ENCODE measurements at regions of chr9 and their contacts with region 1.

Region 1: DNA sequence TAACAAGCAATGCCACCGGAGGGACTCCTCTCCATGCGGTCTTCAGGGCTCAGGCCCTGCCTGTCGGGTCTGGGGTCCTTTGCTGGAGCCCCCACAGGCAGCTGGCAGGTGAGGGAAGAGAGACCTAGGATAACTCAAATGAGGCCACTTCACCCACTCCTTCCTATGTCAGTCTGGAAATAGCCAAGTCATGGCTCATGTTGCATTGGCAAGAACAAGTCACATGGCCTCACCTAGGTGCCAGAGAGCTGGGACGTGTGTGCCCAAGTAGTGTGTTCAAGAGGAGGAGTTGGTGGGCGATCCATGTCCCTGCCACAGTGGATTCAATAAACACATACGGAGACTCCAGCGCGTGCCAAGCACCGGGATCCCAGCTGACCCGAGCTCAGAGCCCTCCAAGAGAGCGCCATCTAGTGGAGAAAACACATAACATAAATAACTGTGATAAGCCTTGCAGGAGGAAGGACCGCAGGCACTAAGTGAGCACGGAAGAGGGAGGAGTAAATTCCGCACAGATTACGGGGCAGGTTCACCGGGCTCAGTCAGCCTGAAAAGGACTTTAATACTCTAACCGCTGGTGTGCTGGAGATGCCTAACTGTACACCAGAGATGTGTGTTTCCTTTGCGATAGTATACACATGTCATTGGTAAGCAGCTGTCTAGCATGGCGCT is 580.8 kb downstream of the CCDC171 start:
- DNase-seq: no peak
- H3K4me3 ChIP-seq: no peak overlapping the region
- H3K27ac ChIP-seq: no peak overlapping the region
- H3K4me1 ChIP-seq: peaks cover 0 to 2% (median under 1%) of the 10 kb centered on the region in 4 donors
- H3K27me3 ChIP-seq: no peaks in the 10 kb centered on the region
- CTCF ChIP-seq: peak; percentile 14 to 54 (median 30)
- EP300 ChIP-seq: no peak
- POLR2A ChIP-seq: no peak

Region 2: DNA sequence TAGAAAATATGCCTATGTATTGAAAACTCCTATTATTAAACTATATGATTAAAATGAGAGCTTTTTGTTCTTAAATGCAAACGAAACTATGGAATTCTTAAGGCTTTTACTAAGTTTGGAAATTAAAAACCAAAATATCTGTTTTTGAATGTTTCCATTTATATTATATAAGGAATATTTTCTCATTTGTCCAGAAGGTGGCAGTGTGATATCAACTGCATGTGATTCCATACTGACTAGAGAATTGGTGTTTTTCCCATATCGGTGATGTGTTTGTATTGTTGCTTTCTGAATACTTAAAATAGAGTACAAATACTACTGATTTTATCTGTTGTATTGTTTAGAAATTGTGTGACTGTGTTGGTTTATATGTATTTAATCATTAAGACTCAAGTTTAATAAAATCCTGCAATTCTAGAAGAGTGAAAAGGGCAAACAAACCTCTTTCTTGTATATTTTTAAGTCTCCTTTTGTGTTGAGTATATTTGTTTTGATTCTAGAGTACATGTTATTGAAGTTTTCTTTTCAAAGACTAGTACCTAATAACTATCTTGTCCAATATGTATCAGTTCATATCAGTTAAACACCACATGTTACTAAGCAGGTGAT is 260.0 kb before region 1 on chr9:
- intact Hi-C with region 1: loop called (anchors 5 kb)
- DNase-seq: no peak
- H3K4me3 ChIP-seq: no peak overlapping the region
- H3K27ac ChIP-seq: no peak overlapping the region
- H3K4me1 ChIP-seq: no peaks in the 10 kb centered on the region
- H3K27me3 ChIP-seq: no peaks in the 10 kb centered on the region
- CTCF ChIP-seq: peak; percentile 60 to 70 (median 68)
- EP300 ChIP-seq: no peak
- POLR2A ChIP-seq: no peak

Measured in esophagus muscularis mucosa (tissue), 4 donors.